ENCODE measurements at regions of chr10 and their contacts with region 1.

Region 1: DNA sequence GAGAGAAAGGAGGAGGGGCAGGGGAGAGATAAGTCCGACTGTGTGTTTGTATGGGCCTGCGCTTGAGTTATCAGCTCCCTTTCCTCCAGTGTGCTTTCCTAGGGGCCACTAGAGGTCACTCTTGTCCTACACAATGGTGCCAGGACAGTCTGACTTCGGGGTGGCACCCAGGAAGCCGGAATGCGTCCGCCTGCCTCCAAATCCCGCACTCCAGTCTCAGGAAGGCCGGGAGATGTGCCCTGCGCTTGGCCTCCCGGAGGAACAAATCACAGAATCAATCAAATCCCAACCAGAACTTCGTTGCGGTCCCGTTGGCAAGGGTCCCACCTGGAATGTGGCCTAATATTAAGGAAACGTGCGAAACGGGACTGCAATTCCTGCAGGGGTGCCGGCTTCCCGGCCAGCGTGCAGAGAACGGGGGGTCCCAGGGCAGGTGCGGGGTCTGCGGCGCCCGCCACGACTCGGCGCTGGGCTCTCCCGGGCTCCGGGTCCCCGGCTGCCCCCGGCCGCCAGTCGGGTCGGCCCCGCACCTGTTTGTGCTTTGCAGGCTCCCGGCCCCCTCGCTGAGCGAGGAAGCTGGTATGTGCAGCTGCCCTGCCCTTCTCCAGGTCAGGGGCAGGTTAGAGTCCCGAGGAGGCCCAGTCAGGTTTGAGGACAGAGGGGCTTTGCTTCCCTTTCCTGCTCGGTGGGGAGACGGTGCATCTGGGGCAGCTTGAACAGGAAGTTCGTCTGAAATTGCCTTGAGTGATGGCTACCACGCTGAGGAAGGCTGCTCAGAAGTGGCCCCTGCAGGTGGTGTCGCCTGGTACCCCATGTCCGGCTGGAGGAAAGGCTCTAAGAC is 21.0 kb upstream of the HPS1 start:
- DNase-seq: peak; percentile 83
- ATAC-seq: peak; percentile 95

Region 2: DNA sequence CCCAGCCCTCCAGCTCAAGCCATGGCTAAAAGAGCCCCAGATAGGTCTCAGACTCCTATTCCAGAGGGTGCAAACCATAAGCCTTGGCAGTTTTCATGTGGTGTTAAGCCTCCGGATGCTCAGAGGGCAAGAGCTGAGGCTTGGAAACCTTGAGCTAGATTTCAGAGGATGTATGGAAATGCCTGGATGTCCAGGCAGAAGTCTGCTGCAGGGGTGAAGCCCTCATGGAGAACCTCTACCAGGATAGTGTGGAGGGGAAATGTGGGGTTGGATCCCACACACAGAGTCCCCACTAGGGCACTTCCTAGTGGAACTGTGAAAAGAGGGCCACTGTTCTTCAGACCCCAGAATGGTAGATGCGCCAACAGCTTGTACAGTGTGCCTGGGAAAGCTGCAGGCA is 781.1 kb after region 1 on chr10:
- intact Hi-C with region 1: loop called (anchors 5 kb)
- DNase-seq: no peak
- ATAC-seq: no peak

Measured in sciatic nerve (tissue), 2 donors.